AG04450 (cell line): ENCODE measurements at regions of chr12 and their contacts with region 1.

Region 1: DNA sequence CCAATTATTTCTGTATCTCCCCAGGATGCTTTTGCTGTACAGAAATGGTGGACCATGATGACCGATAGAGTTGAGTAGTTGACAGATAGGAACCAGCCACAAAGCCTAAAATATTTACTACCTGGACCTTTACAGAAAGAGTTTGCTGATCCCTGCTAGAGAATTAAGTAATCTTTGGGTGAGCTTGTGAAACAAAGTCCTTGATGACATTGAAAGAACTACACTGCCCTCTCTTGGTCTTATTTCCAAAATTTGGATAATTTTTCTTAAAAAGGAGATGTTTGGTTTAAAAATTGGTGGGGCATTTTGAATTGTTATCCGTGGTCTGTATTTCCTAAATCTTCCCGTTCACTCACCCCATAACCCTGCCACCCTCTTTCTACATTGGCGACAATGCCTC is 13.7 kb upstream of the TCTN1 start:
- DNase-seq: no peak
- H3K4me3 ChIP-seq: no peak overlapping the region
- H3K27ac ChIP-seq: no peak overlapping the region
- H3K27me3 ChIP-seq: no peaks in the 10 kb centered on the region
- CTCF ChIP-seq: peak; percentile 49

Region 2: DNA sequence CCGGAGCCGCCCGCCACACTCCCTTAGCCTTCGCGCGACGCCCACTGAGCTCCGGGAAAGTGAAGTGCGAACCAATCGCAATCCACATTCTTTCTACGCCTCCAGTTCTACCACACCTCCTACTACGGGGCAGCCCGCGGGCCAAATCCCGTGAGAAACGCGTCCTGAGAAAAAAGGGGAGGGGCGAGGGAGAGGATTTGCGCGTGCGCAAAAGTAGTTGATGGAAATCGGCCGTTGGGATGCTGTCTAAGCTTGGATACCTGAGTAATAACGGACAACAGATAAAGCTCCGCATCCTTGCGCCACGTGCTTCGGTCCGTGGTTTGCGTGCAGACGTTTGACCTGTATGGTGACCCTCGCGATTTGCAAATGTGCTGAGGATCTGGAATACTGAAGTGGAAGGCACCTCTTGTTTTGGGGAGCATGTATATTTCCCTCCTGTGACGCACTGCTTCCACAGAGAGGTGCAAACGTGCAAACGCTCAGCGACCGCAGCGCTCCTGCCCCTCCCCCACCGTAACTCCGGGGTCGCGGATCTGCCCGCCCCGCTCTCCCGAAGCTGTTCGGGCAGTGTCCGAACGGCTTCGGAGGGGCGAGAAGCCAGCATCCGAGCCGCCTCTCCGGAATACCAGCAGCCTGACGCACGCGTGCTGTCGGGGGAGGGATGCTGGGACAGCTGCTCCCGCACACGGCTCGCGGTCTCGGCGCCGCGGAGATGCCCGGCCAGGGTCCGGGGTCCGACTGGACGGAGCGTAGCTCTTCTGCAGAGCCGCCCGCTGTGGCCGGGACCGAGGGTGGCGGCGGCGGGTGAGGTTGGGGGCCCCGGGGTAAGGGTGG is 131.8 kb before region 1 on chr12 and contains the starts of genes FAM216A and GPN3:
- CTCF ChIA-PET with region 1: interaction called, 84 read pairs
- POLR2A ChIA-PET with region 1: interaction called, 16 read pairs
- DNase-seq: peak; percentile 96
- H3K4me3 ChIP-seq: peak within 1 kb of the TSS; percentile 98
- H3K27ac ChIP-seq: peak within 1 kb of the TSS; percentile 96
- H3K27me3 ChIP-seq: no peaks in the 10 kb centered on the region
- CTCF ChIP-seq: no peak
- polyA plus RNA-seq, gene FAM216A: 17.7 and 21.3 TPM in 2 replicates
- polyA plus RNA-seq, gene GPN3: 16.8 and 25.6 TPM in 2 replicates

Region 3: GRCh38 chr12:110531741-110532333 is 68.4 kb before region 1 on chr12:
- CTCF ChIA-PET with region 1: interaction called, 33 read pairs
- POLR2A ChIA-PET with region 1: no interaction called
- DNase-seq: no peak
- H3K4me3 ChIP-seq: no peak overlapping the region
- H3K27ac ChIP-seq: no peak overlapping the region
- H3K27me3 ChIP-seq: no peaks in the 10 kb centered on the region
- CTCF ChIP-seq: no peak

Region 4: GRCh38 chr12:110575326-110575725 is 24.9 kb before region 1 on chr12:
- CTCF ChIA-PET with region 1: interaction called, 12 read pairs
- POLR2A ChIA-PET with region 1: no interaction called
- DNase-seq: no peak
- H3K4me3 ChIP-seq: no peak overlapping the region
- H3K27ac ChIP-seq: no peak overlapping the region
- H3K27me3 ChIP-seq: no peaks in the 10 kb centered on the region
- CTCF ChIP-seq: no peak

Region 5: GRCh38 chr12:110613771-110614684 is 13.8 kb after region 1 on chr12 and contains the start of gene TCTN1:
- CTCF ChIA-PET with region 1: interaction called, 42 read pairs
- POLR2A ChIA-PET with region 1: interaction called, 6 read pairs
- DNase-seq: peak; percentile 82
- H3K4me3 ChIP-seq: peak within 1 kb of the TSS; percentile 83
- H3K27ac ChIP-seq: no peak within 1 kb of the TSS
- H3K27me3 ChIP-seq: no peaks in the 10 kb centered on the region
- CTCF ChIP-seq: no peak
- polyA plus RNA-seq, gene TCTN1: 32.7 and 35.4 TPM in 2 replicates

Region 6: DNA sequence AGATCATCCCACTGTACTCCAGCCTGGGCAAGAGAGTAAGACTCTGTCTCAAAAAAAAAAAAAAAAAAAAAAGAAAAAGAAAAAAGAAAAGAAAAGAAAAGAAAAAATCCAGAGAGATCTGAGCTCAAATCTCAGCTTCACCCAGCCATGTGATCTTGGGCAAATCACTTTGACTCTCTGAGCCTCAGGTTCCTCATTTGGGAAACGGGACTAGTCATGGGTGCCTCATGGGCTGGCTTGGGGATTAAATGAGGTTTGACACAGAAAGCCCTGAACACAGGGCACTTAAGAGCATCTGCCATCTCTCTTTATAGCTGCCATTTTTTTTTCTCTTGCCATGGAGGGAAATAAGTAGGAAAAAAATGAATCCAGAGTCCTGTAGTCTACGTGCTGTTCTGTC is 406.4 kb after region 1 on chr12:
- CTCF ChIA-PET with region 1: no interaction called
- POLR2A ChIA-PET with region 1: no interaction called
- DNase-seq: no peak
- H3K4me3 ChIP-seq: no peak overlapping the region
- H3K27ac ChIP-seq: no peak overlapping the region
- H3K27me3 ChIP-seq: no peaks in the 10 kb centered on the region
- CTCF ChIP-seq: no peak